ENCODE measurements at regions of chr15 and their contacts with region 1.

Region 1: GRCh38 chr15:51888593-51889195 is 59.2 kb downstream of the TMOD3 start:
- DNase-seq: peak; percentile 57
- H3K4me3 ChIP-seq: no peak overlapping the region; a peak in 1 of 4 replicates
- H3K27ac ChIP-seq: peak overlapping the region in 1 of 2 experiments; percentile 6; a peak in 1 of 4 replicates
- H3K4me1 ChIP-seq: peaks cover 0 to 13% of the 10 kb centered on the region in 2 experiments; a peak in 2 of 4 replicates
- H3K27me3 ChIP-seq: no peaks in the 10 kb centered on the region
- CTCF ChIP-seq: peak; percentile 91
- EP300 ChIP-seq: no peak
- RAD21 ChIP-seq: peak; percentile 66

Region 2: GRCh38 chr15:51869070-51869425 is 19.6 kb before region 1 on chr15:
- CTCF ChIA-PET with region 1: interaction called, 10 read pairs
- POLR2A ChIA-PET with region 1: no interaction called
- DNase-seq: peak; percentile 32
- H3K4me3 ChIP-seq: no peak overlapping the region
- H3K27ac ChIP-seq: peak overlapping the region; percentile 61 to 83
- H3K4me1 ChIP-seq: peaks cover 10 to 31% of the 10 kb centered on the region in 2 experiments
- H3K27me3 ChIP-seq: no peaks in the 10 kb centered on the region
- CTCF ChIP-seq: no peak
- EP300 ChIP-seq: peak; percentile 30 to 53; a peak in 3 of 4 replicates
- RAD21 ChIP-seq: no peak

Region 3: GRCh38 chr15:51904931-51905330 is 16.2 kb after region 1 on chr15:
- CTCF ChIA-PET with region 1: interaction called, 32 read pairs
- POLR2A ChIA-PET with region 1: no interaction called
- DNase-seq: no peak
- H3K4me3 ChIP-seq: no peak overlapping the region
- H3K27ac ChIP-seq: no peak overlapping the region
- H3K4me1 ChIP-seq: peaks cover 0 to 11% of the 10 kb centered on the region in 2 experiments; a peak in 1 of 4 replicates
- H3K27me3 ChIP-seq: no peaks in the 10 kb centered on the region
- CTCF ChIP-seq: no peak
- EP300 ChIP-seq: no peak
- RAD21 ChIP-seq: no peak

Measured in SK-N-SH (cell line).